ENCODE measurements at regions of chr11 and their contacts with region 1.

Region 1: GRCh38 chr11:43852057-43852636 is 28.5 kb upstream of the ALKBH3 start:
- DNase-seq: peak; percentile 79
- H3K4me3 ChIP-seq: no peak overlapping the region
- H3K27ac ChIP-seq: no peak overlapping the region
- H3K27me3 ChIP-seq: no peaks in the 10 kb centered on the region
- CTCF ChIP-seq: peak; percentile 94

Region 2: DNA sequence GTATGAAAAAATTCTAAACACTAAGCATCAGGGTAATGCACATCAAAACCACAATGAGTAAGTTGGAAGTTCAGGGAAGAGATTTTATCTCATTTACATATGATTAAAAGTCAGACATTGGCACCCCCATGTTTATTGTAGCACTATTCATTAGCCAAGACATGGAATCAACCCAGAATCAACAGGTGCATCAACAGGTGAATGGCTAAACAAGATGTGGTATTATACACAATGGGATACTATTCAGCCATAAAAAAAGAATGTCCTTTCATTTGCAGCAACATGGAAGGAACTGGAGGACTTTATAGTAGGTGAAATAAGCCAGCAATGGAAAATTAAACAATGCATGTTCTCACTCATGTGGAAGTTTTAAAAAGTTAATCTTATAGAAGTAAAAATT is 511.0 kb before region 1 on chr11:
- CTCF ChIA-PET with region 1: no interaction called
- POLR2A ChIA-PET with region 1: no interaction called
- DNase-seq: no peak
- H3K4me3 ChIP-seq: no peak overlapping the region
- H3K27ac ChIP-seq: no peak overlapping the region
- H3K27me3 ChIP-seq: no peaks in the 10 kb centered on the region
- CTCF ChIP-seq: no peak

Region 3: GRCh38 chr11:43497144-43497543 is 355.0 kb before region 1 on chr11:
- CTCF ChIA-PET with region 1: interaction called, 13 read pairs
- POLR2A ChIA-PET with region 1: no interaction called
- DNase-seq: no peak
- H3K4me3 ChIP-seq: no peak overlapping the region
- H3K27ac ChIP-seq: no peak overlapping the region
- H3K27me3 ChIP-seq: no peaks in the 10 kb centered on the region
- CTCF ChIP-seq: no peak

Region 4: GRCh38 chr11:43567396-43567975 is 284.7 kb before region 1 on chr11:
- CTCF ChIA-PET with region 1: interaction called, 29 read pairs
- POLR2A ChIA-PET with region 1: no interaction called
- DNase-seq: peak; percentile 27
- H3K4me3 ChIP-seq: no peak overlapping the region
- H3K27ac ChIP-seq: no peak overlapping the region
- H3K27me3 ChIP-seq: peaks cover 24% of the 10 kb centered on the region
- CTCF ChIP-seq: peak; percentile 80

Region 5: DNA sequence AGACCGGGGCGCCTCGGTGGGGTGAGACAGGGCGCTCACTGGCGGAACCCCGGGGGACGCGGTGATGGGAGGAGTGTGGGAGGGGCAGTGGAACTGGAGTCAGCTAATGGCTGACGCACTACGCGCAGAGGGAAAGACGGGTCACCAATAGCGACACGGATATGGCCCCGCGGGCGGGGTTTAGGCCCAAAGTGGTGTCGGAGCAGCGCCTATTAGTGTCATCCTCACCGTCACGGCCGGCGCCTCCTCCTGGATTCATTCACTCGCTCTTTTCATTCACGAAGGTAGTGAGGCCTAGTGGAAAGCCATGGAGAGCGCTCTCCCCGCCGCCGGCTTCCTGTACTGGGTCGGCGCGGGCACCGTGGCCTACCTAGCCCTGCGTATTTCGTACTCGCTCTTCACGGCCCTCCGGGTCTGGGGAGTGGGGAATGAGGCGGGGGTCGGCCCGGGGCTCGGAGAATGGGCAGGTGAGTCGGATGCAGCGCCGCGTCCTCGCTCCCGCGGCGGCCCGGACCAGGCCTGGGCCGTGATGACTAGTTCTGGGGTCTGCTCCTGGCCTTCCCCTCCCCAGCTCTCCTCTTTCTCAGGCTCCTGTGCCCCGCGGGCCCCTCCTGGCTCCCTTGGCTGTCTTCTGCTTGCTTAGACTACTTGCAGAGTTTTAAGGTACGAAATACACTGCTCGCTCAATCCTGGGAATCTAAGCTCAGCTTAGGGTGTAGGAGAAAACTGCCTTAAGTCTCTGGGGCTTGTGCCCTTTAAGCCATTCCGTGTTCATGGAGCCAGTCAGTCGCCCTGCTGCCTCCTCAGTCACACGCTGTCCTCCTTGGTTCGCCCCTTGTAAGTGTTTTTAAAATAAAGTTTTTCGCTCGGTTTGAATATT is 171.4 kb before region 1 on chr11 and contains the start of gene HSD17B12:
- CTCF ChIA-PET with region 1: interaction called, 15 read pairs
- POLR2A ChIA-PET with region 1: interaction called, 3 read pairs
- DNase-seq: peak; percentile 96
- H3K4me3 ChIP-seq: peak within 1 kb of the TSS; percentile 85
- H3K27ac ChIP-seq: peak within 1 kb of the TSS; percentile 93
- H3K27me3 ChIP-seq: no peaks in the 10 kb centered on the region
- CTCF ChIP-seq: no peak; the same call in 1 of the 2 replicates
- polyA plus RNA-seq, gene HSD17B12: 59.3 and 60.8 TPM in 2 replicates

Region 6: DNA sequence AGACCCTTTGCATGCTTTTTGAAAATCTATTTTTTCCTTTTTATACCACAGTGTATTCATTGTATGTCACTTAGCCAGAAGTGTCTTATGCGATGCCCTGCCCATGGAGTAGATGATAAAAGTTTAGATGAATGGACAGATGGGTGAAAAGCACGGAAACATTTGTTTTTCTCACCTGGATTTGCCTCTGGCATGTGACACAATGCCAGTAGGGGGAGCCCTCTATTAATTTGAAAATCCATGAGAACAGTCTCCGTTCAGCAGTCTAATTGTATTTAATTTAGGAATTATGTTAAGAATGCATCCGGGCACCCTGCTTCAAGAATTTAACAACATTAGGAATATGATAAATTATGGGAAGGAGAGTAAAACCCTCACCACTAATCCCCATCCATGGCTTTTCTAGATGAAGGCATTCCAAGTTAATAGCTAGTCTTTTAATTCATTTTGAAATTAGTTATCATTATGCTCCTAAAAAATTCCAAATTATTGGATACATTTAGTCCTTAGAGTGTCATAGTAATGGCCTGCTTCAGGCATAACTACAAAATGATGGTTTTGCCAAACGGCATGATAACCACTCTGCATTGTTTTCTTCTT is 26.8 kb before region 1 on chr11:
- CTCF ChIA-PET with region 1: interaction called, 249 read pairs
- POLR2A ChIA-PET with region 1: no interaction called
- DNase-seq: no peak
- H3K4me3 ChIP-seq: no peak overlapping the region
- H3K27ac ChIP-seq: no peak overlapping the region
- H3K27me3 ChIP-seq: no peaks in the 10 kb centered on the region
- CTCF ChIP-seq: peak; percentile 81

Region 7: GRCh38 chr11:43842021-43842420 is 10.1 kb before region 1 on chr11:
- CTCF ChIA-PET with region 1: interaction called, 29 read pairs
- POLR2A ChIA-PET with region 1: no interaction called
- DNase-seq: no peak
- H3K4me3 ChIP-seq: no peak overlapping the region
- H3K27ac ChIP-seq: no peak overlapping the region
- H3K27me3 ChIP-seq: no peaks in the 10 kb centered on the region
- CTCF ChIP-seq: no peak